ENCODE measurements at regions of chr20 and their contacts with region 1.

Region 1: DNA sequence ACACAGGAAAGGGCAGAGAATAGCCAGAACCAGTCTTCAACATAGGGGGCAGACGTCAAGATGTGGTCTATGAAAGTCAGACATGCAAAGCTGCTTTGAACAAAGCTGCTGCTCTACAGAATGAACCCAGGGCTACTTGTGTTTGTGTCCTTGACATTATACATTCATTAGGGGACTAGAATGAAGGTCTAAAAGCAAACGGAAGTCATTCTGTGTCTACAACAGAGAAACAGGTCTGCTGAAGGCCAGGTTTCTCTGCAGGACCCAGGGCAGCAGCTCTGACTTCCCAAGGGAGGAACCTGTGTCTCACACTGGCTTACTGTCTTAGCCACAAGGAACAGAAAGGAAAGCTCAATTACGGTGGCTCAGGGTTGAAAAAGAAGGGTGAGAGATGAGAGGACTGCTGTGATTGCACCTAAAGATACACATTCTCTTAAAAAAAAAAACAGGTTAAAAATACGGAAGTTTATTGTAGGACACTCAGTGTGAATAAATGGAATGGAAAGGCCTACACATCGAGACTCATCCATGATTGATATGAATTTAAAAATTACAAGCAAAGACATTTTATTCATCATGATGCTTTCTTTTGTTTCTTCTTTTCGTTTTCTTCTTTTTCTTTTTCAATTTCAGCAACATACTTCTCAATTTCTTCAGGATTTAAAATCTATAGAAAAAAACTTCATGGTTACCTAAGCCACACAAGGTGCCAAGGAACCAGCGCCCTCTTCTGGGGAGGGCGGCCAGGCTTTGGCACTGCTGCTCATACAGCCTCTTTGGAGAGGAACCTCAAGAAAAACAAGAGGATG is 6.7 kb downstream of the PSMA7 start:
- DNase-seq: no peak
- H3K4me3 ChIP-seq: no peak overlapping the region
- H3K27ac ChIP-seq: no peak overlapping the region
- H3K27me3 ChIP-seq: no peaks in the 10 kb centered on the region
- CTCF ChIP-seq: peak; percentile 90

Region 2: DNA sequence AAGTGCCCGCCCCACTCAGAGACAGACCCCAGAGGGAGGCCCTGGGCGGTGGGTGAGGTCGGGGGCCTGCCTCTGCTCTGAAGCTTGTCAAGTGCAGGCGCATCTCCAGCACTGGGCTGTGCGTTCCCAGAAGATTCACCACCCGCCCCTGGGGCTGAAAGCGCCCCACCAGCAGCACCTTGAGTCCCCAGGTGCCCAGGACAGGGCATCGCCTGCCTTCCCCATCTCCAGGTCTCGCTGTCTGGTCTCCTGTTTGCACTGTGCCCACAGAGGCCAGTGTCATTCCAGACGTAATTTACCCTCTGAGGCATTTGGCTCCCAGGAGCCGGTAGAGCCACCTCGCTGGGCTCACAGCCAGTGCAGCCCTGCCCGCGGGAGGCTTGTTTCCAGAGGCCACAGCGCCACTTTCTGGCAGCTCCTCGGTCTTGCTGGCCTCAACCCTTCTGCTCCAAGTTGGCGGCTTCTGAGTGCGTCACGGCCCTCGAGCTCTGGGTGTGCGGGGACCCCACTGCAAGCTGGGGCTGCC is 261.9 kb before region 1 on chr20:
- CTCF ChIA-PET with region 1: no interaction called
- POLR2A ChIA-PET with region 1: no interaction called
- DNase-seq: no peak
- H3K4me3 ChIP-seq: no peak overlapping the region
- H3K27ac ChIP-seq: no peak overlapping the region
- H3K27me3 ChIP-seq: peaks cover under 1% of the 10 kb centered on the region
- CTCF ChIP-seq: no peak

Region 3: DNA sequence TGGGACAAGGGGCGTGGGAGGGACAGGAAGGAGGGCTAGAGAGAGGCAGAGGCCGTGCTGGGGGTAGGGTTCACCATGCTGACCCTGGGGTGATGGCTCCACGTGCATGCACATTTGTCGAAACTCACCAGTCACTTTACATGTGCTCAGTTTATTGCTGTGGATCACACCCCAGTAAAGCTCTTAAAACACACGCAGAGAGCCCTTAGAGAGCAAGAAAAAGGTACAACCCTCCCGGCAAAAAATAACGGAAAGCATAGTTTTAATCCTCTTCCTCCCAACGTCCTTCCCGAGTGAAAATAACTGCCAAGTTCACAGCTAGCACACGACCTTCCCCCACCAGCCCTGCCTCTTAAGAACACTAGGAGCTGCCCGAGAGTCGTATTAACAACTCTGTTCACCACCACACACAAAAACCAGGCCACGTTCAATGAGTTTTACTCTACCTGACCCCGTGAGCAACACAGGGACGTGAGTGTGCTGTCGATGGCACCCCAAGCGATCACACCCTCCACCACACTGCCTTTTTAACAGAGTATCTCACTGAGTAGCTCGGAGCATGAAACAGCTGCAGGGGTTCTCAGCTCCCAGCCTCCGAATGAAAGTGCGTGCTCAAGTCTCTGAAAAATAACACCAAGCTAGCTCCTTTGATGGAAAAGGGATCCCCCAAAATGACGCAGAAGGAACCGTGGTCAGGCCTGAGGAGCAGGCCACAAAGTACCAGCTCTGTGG is 110.5 kb before region 1 on chr20:
- CTCF ChIA-PET with region 1: interaction called, 14 read pairs
- POLR2A ChIA-PET with region 1: interaction called, 3 read pairs
- DNase-seq: peak; percentile 20
- H3K4me3 ChIP-seq: no peak overlapping the region
- H3K27ac ChIP-seq: no peak overlapping the region
- H3K27me3 ChIP-seq: no peaks in the 10 kb centered on the region
- CTCF ChIP-seq: peak; percentile 78

Region 4: GRCh38 chr20:62164879-62165761 is 28.6 kb after region 1 on chr20:
- CTCF ChIA-PET with region 1: interaction called, 15 read pairs
- POLR2A ChIA-PET with region 1: no interaction called
- DNase-seq: no peak
- H3K4me3 ChIP-seq: no peak overlapping the region
- H3K27ac ChIP-seq: no peak overlapping the region
- H3K27me3 ChIP-seq: no peaks in the 10 kb centered on the region
- CTCF ChIP-seq: no peak